Endothelial cell of umbilical vein (primary cell): ENCODE measurements at regions of chr7 and their contacts with region 1.

Region 1: GRCh38 chr7:112206238-112207044 is at the starts of genes DOCK4 and ZNF277:
- DNase-seq: peak; percentile 99
- H3K4me3 ChIP-seq: peak within 1 kb of the TSS; percentile 90 to 98 (median 93)
- H3K27ac ChIP-seq: peak within 1 kb of the TSS; percentile 83
- H3K4me1 ChIP-seq: peaks cover 23% of the 10 kb centered on the region
- H3K27me3 ChIP-seq: no peaks in the 10 kb centered on the region
- CTCF ChIP-seq: no peak
- POLR2A ChIP-seq: peak; percentile 93
- total RNA-seq, gene DOCK4: 164 TPM in 2 replicates
- total RNA-seq, gene ZNF277: 19.0 and 22.6 TPM in 2 replicates

Region 2: DNA sequence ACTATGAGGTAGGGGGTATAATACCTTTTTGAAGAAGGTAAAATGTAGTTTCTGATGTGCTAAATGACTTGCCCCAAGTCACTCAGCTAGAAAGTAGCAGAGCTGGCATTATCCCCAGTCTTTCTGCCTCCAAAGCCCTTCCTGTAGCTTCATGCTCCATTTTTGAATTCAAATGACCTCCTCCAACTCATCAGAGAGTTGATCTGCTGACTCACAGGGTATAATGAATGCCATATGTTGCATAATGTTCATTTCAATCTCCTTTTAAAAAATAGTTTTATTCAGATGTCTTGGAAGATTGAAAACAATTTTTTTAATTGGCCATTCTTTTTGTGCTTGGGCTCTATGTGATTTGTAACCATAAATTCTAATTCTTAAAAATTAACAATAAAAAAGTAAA is 371.4 kb before region 1 on chr7:
- CTCF ChIA-PET with region 1: no interaction called
- POLR2A ChIA-PET with region 1: no interaction called
- dilution Hi-C with region 1: no loop called
- intact Hi-C with region 1: loop called (anchors 10 kb)
- DNase-seq: peak; percentile 72
- H3K4me3 ChIP-seq: no peak overlapping the region
- H3K27ac ChIP-seq: peak overlapping the region; percentile 9
- H3K4me1 ChIP-seq: peaks cover 49% of the 10 kb centered on the region
- H3K27me3 ChIP-seq: no peaks in the 10 kb centered on the region
- CTCF ChIP-seq: no peak
- POLR2A ChIP-seq: no peak

Region 3: DNA sequence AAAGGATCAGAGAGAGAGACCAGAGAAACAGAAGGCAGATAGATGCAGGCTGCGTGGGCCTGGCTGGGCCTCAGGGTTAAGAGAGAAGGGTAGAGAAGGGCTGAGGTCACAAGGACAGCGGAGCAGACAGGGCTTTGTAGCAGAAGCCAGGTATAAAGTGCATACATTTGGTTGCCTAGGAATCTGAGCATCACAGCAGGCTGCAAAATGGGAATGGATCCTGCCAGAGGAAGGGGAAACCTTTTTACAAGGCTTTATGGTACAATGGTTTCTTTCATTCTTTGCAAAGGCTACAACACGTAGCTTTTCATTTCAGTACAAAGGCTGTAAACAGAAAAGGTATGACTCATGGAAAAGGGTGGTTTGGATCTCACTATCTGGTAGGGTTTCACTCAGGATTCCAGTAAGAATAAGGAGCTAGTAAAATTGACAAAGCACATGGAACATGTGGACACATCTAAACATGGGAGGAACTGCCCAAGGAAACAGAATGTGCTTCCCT is 275.4 kb before region 1 on chr7:
- CTCF ChIA-PET with region 1: no interaction called
- POLR2A ChIA-PET with region 1: no interaction called
- dilution Hi-C with region 1: no loop called
- intact Hi-C with region 1: loop called (anchors 5 kb)
- DNase-seq: peak; percentile 65
- H3K4me3 ChIP-seq: no peak overlapping the region
- H3K27ac ChIP-seq: no peak overlapping the region
- H3K4me1 ChIP-seq: peaks cover 14% of the 10 kb centered on the region
- H3K27me3 ChIP-seq: no peaks in the 10 kb centered on the region
- CTCF ChIP-seq: no peak
- POLR2A ChIP-seq: no peak

Region 4: DNA sequence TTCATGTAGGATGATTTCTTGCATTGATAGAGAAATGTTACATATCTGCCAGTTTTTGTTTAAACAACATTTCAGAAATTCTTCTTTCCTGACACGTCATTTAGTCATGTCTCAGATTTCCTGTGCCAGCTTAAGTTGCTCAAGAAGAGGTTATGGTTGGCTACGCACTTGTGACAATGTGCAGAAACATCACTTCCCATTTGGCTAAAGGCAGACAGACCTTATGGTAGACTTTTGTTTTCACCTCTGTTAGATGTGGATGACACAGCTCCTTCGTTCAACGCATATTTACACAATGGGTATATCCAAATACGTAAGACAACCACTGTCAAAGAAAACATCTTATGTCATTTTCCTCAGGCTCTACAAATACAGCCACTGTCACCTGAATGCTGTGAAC is 126.0 kb before region 1 on chr7:
- CTCF ChIA-PET with region 1: interaction called, 7 read pairs
- POLR2A ChIA-PET with region 1: no interaction called
- dilution Hi-C with region 1: no loop called
- intact Hi-C with region 1: loop called (anchors 1 kb)
- DNase-seq: peak; percentile 85
- H3K4me3 ChIP-seq: peak overlapping the region in 1 of 3 experiments; percentile 36
- H3K27ac ChIP-seq: peak overlapping the region; percentile 95
- H3K4me1 ChIP-seq: peaks cover 46% of the 10 kb centered on the region
- H3K27me3 ChIP-seq: no peaks in the 10 kb centered on the region
- CTCF ChIP-seq: no peak
- POLR2A ChIP-seq: no peak

Region 5: GRCh38 chr7:112162142-112163020 is 44.1 kb before region 1 on chr7:
- CTCF ChIA-PET with region 1: interaction called, 4 read pairs
- POLR2A ChIA-PET with region 1: interaction called, 14 read pairs
- dilution Hi-C with region 1: no loop called
- intact Hi-C with region 1: loop called (anchors 1 kb)
- DNase-seq: peak; percentile 98
- H3K4me3 ChIP-seq: peak overlapping the region in 1 of 3 experiments; percentile 13
- H3K27ac ChIP-seq: peak overlapping the region; percentile 81
- H3K4me1 ChIP-seq: peaks cover 70% of the 10 kb centered on the region
- H3K27me3 ChIP-seq: no peaks in the 10 kb centered on the region
- CTCF ChIP-seq: no peak
- POLR2A ChIP-seq: no peak

Region 6: GRCh38 chr7:112390167-112390566 is 183.7 kb after region 1 on chr7:
- CTCF ChIA-PET with region 1: no interaction called
- POLR2A ChIA-PET with region 1: no interaction called
- dilution Hi-C with region 1: no loop called
- intact Hi-C with region 1: loop called (anchors 5 kb)
- DNase-seq: no peak
- H3K4me3 ChIP-seq: no peak overlapping the region
- H3K27ac ChIP-seq: no peak overlapping the region
- H3K4me1 ChIP-seq: peaks cover 5% of the 10 kb centered on the region
- H3K27me3 ChIP-seq: peaks cover 0 to 1% of the 10 kb centered on the region in 2 experiments
- CTCF ChIP-seq: no peak
- POLR2A ChIP-seq: no peak

Region 7: DNA sequence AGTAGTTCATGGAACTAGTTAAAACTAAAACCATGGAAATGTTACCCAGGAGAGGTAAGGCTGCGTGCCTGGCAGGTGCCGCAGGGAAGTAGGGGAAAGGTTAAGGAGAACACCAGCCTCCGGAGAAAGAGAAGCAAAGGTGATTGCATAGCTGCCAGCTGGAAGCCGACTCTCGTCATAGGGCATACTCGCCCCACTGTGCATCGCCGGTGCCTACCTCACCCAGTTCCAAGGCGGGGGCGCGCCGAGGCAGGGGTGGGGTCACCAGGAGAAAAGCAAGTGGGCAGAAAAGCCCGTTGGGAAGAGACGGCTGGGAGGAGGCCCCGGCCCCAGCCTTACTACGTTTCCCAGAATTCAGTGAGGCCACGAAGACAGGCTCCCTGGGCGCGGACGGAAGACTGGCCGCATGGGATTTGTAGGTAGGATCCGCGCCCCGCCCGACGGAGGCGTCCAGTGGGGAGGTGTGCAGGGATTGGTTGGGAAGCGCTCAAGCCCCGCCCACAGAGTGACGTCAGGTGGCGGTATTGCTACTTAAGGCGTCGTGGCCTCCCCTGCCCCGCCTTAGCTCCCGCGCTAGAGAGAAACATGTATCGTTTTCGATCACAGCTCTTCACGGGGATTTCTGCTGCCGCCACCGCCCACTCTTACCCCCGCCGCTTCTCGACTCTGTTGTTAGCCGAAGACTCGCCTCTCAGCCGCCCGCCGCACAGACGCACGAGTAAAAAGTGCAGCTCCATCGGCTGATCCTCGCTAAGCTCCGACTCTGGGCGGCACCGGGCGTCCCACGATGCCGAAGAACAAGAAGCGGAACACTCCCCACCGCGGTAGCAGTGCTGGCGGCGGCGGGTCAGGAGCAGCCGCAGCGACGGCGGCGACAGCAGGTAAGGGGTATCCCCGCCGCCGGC is 243.7 kb after region 1 on chr7 and contains the start of gene IFRD1:
- CTCF ChIA-PET with region 1: no interaction called
- POLR2A ChIA-PET with region 1: interaction called, 3 read pairs
- dilution Hi-C with region 1: no loop called
- intact Hi-C with region 1: loop called (anchors 1 kb)
- DNase-seq: peak; percentile 98
- H3K4me3 ChIP-seq: peak within 1 kb of the TSS; percentile 73 to 96 (median 87)
- H3K27ac ChIP-seq: peak within 1 kb of the TSS; percentile 92
- H3K4me1 ChIP-seq: peaks cover 26% of the 10 kb centered on the region
- H3K27me3 ChIP-seq: no peaks in the 10 kb centered on the region
- CTCF ChIP-seq: no peak
- POLR2A ChIP-seq: peak; percentile 99
- total RNA-seq, gene IFRD1: 42.2 and 43.3 TPM in 2 replicates